Activated T-helper 2 cell treated with anti-CD3 and anti-CD28 coated beads, Interferon-gamma antibody, Interleukin-2, Interleukin-4, amounts not matched to agents 10 μg/mL and 5 μg/mL and 100 μg/mL, durations not matched to agents 14 hours and 24 hours and 36 hours (primary cell): ENCODE measurements at regions of chr16 and their contacts with region 1.

Region 1: DNA sequence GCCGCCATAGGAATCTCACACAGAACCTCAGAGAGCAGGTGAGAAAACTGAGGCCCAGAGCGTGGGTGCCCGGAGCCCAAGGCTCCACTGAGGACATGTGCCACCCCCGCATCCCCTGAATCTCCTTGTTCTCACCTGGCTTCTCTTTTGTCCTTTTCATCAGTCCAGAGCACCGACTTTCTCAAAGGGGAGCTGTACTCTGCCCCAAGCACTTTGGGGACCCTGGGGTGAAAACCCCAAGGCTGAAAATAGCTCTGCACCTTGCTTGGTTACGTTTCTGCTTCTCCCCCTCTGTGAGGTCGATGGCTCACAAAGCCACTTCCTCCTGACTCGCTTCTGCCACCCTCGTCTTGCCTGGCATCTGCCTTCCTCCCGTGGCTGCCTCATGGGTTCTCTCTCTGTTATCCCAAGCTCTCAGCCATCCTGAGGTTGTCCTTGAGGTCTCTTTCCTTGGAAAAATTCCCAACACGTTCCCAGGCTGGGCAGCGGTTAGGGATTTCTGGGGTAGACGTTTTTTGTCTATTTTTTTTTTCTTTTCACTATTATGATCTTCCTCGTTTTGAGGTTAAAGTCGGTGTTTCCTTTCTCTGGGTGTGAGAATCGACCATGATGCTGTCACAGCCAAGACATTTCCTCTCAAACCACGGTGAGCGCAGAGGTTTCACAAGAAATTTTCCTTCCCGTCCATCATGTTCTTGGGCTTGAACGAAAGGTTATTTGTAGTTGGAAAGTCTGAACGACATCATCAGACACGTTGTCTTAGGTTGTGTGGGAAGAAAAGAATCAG is 37.2 kb downstream of the IRF8 start:
- DNase-seq: peak; percentile 63
- H3K4me3 Mint-ChIP-seq: peak overlapping the region; percentile 32
- H3K27ac Mint-ChIP-seq: peak overlapping the region; percentile 92
- H3K4me1 Mint-ChIP-seq: peaks cover 55% of the 10 kb centered on the region
- H3K27me3 Mint-ChIP-seq: no peaks in the 10 kb centered on the region

Region 2: GRCh38 chr16:85879975-85880831 is 56.0 kb before region 1 on chr16:
- intact Hi-C with region 1: loop called (anchors 1 kb)
- DNase-seq: no peak
- H3K4me3 Mint-ChIP-seq: no peak overlapping the region
- H3K27ac Mint-ChIP-seq: no peak overlapping the region
- H3K4me1 Mint-ChIP-seq: peaks cover 32% of the 10 kb centered on the region
- H3K27me3 Mint-ChIP-seq: peaks cover 61% of the 10 kb centered on the region

Region 3: DNA sequence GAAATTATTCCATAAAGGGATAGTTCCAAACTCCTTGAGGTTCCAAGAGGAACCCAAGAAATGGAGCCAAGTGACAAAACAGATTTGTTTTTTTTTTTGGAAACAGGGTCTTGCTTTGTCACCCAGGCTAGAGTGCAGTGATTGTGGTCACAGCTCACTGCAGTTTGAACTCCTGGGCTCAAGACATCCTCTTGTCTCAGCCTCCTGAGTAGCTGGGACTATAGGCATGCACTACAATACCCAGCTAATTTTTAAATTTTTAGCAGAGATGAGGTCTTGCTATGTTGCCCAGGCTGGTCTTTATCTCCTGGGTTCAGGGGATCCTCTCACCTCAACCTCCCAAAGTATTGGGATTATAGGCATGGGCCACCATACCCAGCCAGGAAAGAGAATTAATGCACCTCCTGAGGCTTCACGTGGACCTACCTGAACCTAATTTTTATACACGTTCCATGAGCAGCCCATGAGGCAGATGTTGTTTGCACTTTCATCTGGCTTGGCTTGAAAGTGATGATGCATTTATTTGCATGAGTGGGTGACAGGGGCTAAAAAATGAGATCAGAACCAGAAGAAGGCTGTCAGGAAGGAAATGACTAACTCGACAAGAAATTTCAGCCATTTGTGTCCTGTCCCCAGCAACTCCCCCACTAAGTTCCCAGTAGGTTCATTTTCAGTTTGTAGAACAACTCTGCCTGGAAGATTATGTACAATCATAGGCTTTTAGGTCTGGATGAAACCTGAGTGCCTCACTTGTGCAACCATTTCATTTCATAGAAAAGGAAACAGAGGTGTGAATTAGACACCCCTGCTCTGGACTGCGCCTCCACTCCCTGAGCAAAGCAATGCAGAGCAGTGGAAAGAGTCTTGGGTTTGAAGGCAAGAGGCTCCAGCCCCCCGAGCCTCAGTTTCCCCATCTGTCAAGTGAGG is 47.5 kb before region 1 on chr16:
- intact Hi-C with region 1: loop called (anchors 1 kb)
- DNase-seq: no peak
- H3K4me3 Mint-ChIP-seq: no peak overlapping the region
- H3K27ac Mint-ChIP-seq: peak overlapping the region; percentile 48
- H3K4me1 Mint-ChIP-seq: peaks cover 36% of the 10 kb centered on the region
- H3K27me3 Mint-ChIP-seq: peaks cover 38% of the 10 kb centered on the region

Region 4: GRCh38 chr16:85898521-85899442 is 37.4 kb before region 1 on chr16 and contains the start of gene IRF8:
- intact Hi-C with region 1: loop called (anchors 1 kb)
- DNase-seq: peak; percentile 52
- H3K4me3 Mint-ChIP-seq: peak within 1 kb of the TSS; percentile 85
- H3K27ac Mint-ChIP-seq: peak within 1 kb of the TSS; percentile 56
- H3K4me1 Mint-ChIP-seq: peaks cover 48% of the 10 kb centered on the region
- H3K27me3 Mint-ChIP-seq: peaks cover 24% of the 10 kb centered on the region
- total RNA-seq, gene IRF8: 37.8 and 40.1 TPM in 2 replicates